Activated T-helper 1 cell treated with anti-CD3 and anti-CD28 coated beads, Interleukin-12 subunit alpha, Interleukin-12 subunit beta, Interleukin-2, Interleukin-4 antibody, amounts not matched to agents 30 ng/mL and 10 ng/mL and 1 ng/mL, durations not matched to agents 14 hours and 24 hours and 36 hours (primary cell): ENCODE measurements at regions of chr1 and their contacts with region 1.

Region 1: GRCh38 chr1:54944610-54945544 is 35.6 kb upstream of the TMEM61 start:
- DNase-seq: peak; percentile 53
- H3K4me3 Mint-ChIP-seq: no peak overlapping the region
- H3K27ac Mint-ChIP-seq: peak overlapping the region; percentile 28
- H3K4me1 Mint-ChIP-seq: peaks cover 13% of the 10 kb centered on the region
- H3K27me3 Mint-ChIP-seq: peaks cover 17% of the 10 kb centered on the region

Region 2: DNA sequence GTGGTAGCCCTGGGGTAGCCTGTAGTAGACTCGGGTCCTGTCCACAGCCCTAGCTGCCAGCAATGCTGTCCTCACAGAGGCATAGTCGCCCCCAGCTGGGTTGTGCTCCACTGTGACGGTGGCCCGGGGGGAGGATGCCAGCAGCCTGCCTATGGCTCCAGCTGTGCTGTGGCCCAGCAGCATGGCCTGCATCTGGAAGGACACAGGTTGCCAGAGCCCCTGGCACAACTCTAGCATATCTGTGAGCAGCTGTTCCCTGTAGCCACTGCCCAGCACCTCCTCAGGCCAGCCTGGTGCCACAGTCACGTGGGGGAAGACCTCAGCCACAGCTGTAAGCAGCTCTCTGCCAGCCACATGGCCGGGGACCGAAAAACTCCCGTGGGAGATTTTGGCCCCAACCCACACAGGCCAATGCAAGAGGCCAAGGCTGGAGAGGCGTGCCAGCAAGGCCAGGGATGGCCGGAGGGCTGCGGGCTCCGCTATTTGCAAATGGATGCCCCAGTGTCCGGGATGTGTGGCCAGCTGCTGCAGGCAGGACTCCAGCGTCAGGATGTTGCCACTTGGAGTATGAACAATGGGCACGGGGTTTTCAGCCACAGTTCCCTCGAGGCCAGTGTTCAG is 335.5 kb before region 1 on chr1:
- intact Hi-C with region 1: no loop called
- DNase-seq: no peak
- H3K4me3 Mint-ChIP-seq: no peak overlapping the region
- H3K27ac Mint-ChIP-seq: no peak overlapping the region
- H3K4me1 Mint-ChIP-seq: peaks cover 4% of the 10 kb centered on the region
- H3K27me3 Mint-ChIP-seq: no peaks in the 10 kb centered on the region

Region 3: GRCh38 chr1:55337801-55338447 is 393.0 kb after region 1 on chr1:
- intact Hi-C with region 1: loop called (anchors 1 kb)
- DNase-seq: peak; percentile 2
- H3K4me3 Mint-ChIP-seq: no peak overlapping the region
- H3K27ac Mint-ChIP-seq: no peak overlapping the region
- H3K4me1 Mint-ChIP-seq: peaks cover 6% of the 10 kb centered on the region
- H3K27me3 Mint-ChIP-seq: peaks cover 2% of the 10 kb centered on the region

Region 4: GRCh38 chr1:55369474-55369873 is 424.6 kb after region 1 on chr1:
- intact Hi-C with region 1: no loop called
- DNase-seq: no peak
- H3K4me3 Mint-ChIP-seq: no peak overlapping the region
- H3K27ac Mint-ChIP-seq: no peak overlapping the region
- H3K4me1 Mint-ChIP-seq: no peaks in the 10 kb centered on the region
- H3K27me3 Mint-ChIP-seq: peaks cover 2% of the 10 kb centered on the region